HepG2 (cell line): ENCODE measurements at regions of chr1 and their contacts with region 1.

Region 1: GRCh38 chr1:155250633-155251449 is 4.4 kb downstream of the ENTREP3 start:
- DNase-seq: peak; percentile 90
- ATAC-seq: peak; percentile 87
- H3K4me3 ChIP-seq: peak overlapping the region in 1 of 3 experiments; percentile 41; a peak in 2 of 6 replicates
- H3K27ac ChIP-seq: peak overlapping the region; percentile 71
- H3K4me1 ChIP-seq: peaks cover 44% of the 10 kb centered on the region
- H3K27me3 ChIP-seq: no peaks in the 10 kb centered on the region
- CTCF ChIP-seq: peak; percentile 99
- EP300 ChIP-seq: no peak
- POLR2A ChIP-seq: no peak
- RAD21 ChIP-seq: peak; percentile 97

Region 2: DNA sequence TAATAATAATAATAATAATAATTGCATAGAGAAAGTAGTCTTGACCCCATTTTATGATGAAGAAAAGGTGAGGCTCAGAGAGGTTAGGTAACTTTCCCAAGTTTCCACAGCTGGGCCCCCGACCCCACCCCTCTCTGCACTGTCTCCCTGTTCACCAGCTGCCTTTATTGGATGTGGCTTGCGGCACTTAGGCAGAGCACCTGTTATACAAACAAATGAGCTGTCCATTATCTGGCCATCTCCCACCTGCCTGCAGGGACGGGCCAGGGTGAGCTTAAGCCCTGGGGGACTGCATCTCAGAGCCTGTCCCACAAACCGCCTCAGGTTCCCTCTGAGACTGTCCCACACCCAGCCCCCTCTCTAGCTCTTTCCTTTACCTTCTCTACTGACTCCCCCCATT is 133.2 kb before region 1 on chr1:
- CTCF ChIA-PET with region 1: no interaction called
- POLR2A ChIA-PET with region 1: no interaction called
- in situ Hi-C with region 1: no loop called
- intact Hi-C with region 1: no loop called
- DNase-seq: no peak
- ATAC-seq: no peak
- H3K4me3 ChIP-seq: no peak overlapping the region
- H3K27ac ChIP-seq: no peak overlapping the region
- H3K4me1 ChIP-seq: peaks cover 22% of the 10 kb centered on the region
- H3K27me3 ChIP-seq: peaks cover 0 to 7% of the 10 kb centered on the region in 2 experiments; a peak in 1 of 5 replicates
- CTCF ChIP-seq: no peak
- EP300 ChIP-seq: no peak
- POLR2A ChIP-seq: no peak
- RAD21 ChIP-seq: no peak

Region 3: DNA sequence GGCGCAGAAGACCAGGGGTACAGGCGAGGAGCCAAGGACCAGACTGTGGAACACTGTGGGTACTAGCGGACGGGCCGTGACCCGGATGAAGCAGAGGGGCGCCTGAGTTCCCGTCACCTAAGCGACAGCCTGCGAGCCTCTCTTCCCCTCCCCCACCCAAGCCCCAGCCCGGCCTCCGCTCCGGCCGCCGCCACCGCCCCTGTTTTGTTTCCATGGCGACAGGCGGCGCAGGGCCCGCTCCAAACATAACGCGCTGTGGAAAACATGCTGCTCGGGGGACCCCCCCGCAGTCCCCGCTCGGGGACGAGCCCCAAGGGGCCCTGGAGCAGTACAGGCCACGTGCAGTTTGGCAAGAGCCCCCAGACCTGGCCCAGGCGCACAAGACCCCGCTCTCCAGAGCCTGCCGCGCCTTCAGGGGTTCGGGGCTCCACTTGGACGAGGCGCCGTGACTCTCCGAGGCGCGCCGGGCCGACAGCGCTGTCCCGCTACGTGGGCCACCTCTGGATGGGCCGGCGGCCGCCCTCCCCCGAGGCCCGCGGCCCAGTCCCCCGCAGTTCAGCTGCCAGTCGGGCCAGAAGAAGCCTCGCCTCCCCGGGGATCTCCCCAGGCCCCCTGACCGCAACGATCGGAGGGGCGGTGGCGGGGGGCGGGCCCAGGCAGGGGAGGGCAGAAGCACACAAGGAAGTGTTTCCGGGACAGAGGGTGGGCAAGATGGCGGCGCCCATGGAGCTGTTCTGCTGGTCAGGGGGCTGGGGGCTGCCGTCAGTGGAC is 42.1 kb before region 1 on chr1 and contains the start of gene MTX1:
- CTCF ChIA-PET with region 1: interaction called, 6 read pairs
- POLR2A ChIA-PET with region 1: no interaction called
- in situ Hi-C with region 1: no loop called
- intact Hi-C with region 1: loop called (anchors 2 kb)
- DNase-seq: peak; percentile 78
- ATAC-seq: peak; percentile 86
- H3K4me3 ChIP-seq: peak within 1 kb of the TSS; percentile 96 to 99 (median 98)
- H3K27ac ChIP-seq: peak within 1 kb of the TSS; percentile 98
- H3K4me1 ChIP-seq: peaks cover 29% of the 10 kb centered on the region
- H3K27me3 ChIP-seq: peaks cover 0 to 9% of the 10 kb centered on the region in 2 experiments; a peak in 1 of 5 replicates
- CTCF ChIP-seq: no peak
- EP300 ChIP-seq: no peak; a peak in 2 of 4 replicates
- POLR2A ChIP-seq: peak; percentile 72 to 82
- RAD21 ChIP-seq: peak; percentile 27; the same call in 1 of the 2 replicates
- total RNA-seq, gene MTX1: 64.5 and 71.5 TPM in 2 replicates

Region 4: GRCh38 chr1:155267373-155267772 is 16.5 kb after region 1 on chr1:
- CTCF ChIA-PET with region 1: no interaction called
- POLR2A ChIA-PET with region 1: interaction called, 23 read pairs
- in situ Hi-C with region 1: no loop called
- intact Hi-C with region 1: no loop called
- DNase-seq: no peak
- ATAC-seq: no peak
- H3K4me3 ChIP-seq: no peak overlapping the region
- H3K27ac ChIP-seq: no peak overlapping the region
- H3K4me1 ChIP-seq: peaks cover 21% of the 10 kb centered on the region
- H3K27me3 ChIP-seq: no peaks in the 10 kb centered on the region
- CTCF ChIP-seq: no peak
- EP300 ChIP-seq: no peak
- POLR2A ChIP-seq: no peak
- RAD21 ChIP-seq: no peak

Region 5: DNA sequence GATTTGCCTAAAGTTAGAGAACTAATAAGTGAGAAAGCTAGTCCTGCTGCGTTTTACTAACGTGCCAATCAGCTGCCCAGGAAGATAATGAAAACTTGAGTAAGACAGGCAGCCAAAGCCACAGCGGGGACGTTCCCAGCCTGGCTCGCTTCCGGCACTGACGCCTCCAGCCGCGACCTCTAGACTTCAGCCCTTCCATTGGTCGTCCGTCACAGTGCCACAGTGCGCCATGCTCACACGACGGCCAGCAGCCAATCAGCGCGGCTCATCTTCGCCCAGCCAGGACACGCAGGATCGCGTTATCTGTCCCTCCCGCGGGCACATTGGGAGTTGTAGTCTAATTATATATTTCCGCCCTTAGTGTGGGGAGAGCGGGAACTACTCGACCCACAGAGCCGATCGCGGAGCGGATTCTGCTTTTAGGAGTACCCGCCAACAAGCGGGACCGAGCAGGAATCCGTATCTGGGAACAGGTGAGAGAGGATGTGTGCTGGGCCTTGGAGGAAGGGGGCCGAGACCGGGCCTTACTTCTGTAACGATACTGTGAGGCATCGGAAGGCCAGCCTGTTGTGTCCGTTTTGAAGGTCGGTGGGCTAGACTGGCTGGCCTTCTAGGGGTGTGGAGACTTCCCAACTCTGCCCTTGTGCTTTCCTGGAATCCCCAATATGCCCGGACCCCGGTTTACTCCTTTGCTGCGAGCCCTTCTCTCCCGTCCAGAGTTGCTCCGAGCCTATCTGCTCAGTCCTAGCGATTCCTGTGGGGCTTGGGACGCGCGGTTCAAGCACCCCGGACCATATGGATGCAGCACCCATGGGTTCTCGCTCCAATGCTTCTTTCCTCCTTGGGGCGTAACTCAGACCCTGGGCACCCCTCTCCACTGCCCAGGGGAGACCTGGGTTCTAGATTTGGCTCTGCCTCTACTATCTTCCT is 57.9 kb after region 1 on chr1 and contains the start of gene FDPS:
- CTCF ChIA-PET with region 1: interaction called, 36 read pairs
- POLR2A ChIA-PET with region 1: interaction called, 17 read pairs
- in situ Hi-C with region 1: loop called (anchors 10 kb)
- intact Hi-C with region 1: loop called (anchors 1 kb)
- DNase-seq: peak; percentile 97
- ATAC-seq: peak; percentile 92
- H3K4me3 ChIP-seq: peak within 1 kb of the TSS; percentile 92 to 95 (median 94)
- H3K27ac ChIP-seq: peak within 1 kb of the TSS; percentile 83
- H3K4me1 ChIP-seq: peaks cover 84% of the 10 kb centered on the region
- H3K27me3 ChIP-seq: no peaks in the 10 kb centered on the region; a peak in 1 of 5 replicates
- CTCF ChIP-seq: no peak; the same call in 1 of the 2 replicates
- EP300 ChIP-seq: peak in 1 of 2 experiments; percentile 57; a peak in 2 of 4 replicates
- POLR2A ChIP-seq: peak; percentile 71 to 84
- RAD21 ChIP-seq: 0 out of 2 replicates have a peak, but pooled peaks have one; percentile 22
- total RNA-seq, gene FDPS: 519 and 610 TPM in 2 replicates

Region 6: GRCh38 chr1:155591770-155592169 is 340.9 kb after region 1 on chr1:
- CTCF ChIA-PET with region 1: interaction called, 14 read pairs
- POLR2A ChIA-PET with region 1: no interaction called
- in situ Hi-C with region 1: loop called (anchors 10 kb)
- intact Hi-C with region 1: loop called (anchors 2 kb)
- DNase-seq: peak; percentile 68
- ATAC-seq: peak; percentile 68
- H3K4me3 ChIP-seq: no peak overlapping the region
- H3K27ac ChIP-seq: no peak overlapping the region
- H3K4me1 ChIP-seq: no peaks in the 10 kb centered on the region
- H3K27me3 ChIP-seq: no peaks in the 10 kb centered on the region
- CTCF ChIP-seq: peak; percentile 72
- EP300 ChIP-seq: no peak
- POLR2A ChIP-seq: no peak
- RAD21 ChIP-seq: peak; percentile 33; the same call in 1 of the 2 replicates